ENCODE measurements at regions of chr14 and their contacts with region 1.

Region 1: GRCh38 chr14:50599700-50600444 is 39.9 kb downstream of the ATL1 start:
- DNase-seq: peak in 1 of 2 experiments; percentile 63
- H3K4me3 ChIP-seq: no peak overlapping the region; the same call in 1 of the 2 replicates
- H3K27ac ChIP-seq: no peak overlapping the region
- H3K4me1 ChIP-seq: peaks cover 20% of the 10 kb centered on the region
- H3K27me3 ChIP-seq: no peaks in the 10 kb centered on the region
- CTCF ChIP-seq: peak; percentile 70

Region 2: DNA sequence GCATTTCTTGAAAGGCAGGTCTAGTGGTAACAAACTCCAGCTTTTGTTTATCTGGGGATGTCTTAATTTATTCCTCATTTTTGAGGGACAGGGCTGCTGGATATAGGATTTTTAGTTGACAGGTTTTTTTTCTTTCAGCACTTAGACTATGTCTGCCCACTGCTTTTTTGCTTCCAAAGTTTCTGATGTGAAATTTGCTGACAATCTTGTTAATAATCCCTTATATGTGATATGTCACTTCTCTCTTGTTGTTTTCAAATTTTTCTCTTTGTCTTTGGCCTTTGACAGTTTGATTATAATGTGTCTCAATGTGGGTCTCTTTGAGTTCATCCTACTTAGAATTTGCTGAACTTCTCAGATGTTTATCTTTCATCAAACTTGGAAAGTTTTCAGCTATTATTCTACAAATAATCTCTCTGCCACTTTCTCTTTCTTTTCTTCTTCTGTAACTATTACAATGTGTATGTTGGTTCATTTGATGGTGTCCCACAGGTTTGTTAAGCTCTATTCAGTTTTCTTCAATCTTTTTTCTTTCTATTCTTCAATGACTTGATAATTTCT is 30.1 kb before region 1 on chr14:
- CTCF ChIA-PET with region 1: no interaction called
- POLR2A ChIA-PET with region 1: no interaction called
- intact Hi-C with region 1: no loop called
- DNase-seq: no peak
- H3K4me3 ChIP-seq: no peak overlapping the region
- H3K27ac ChIP-seq: no peak overlapping the region
- H3K4me1 ChIP-seq: no peaks in the 10 kb centered on the region; the same call in 1 of the 2 replicates
- H3K27me3 ChIP-seq: no peaks in the 10 kb centered on the region
- CTCF ChIP-seq: no peak

Region 3: DNA sequence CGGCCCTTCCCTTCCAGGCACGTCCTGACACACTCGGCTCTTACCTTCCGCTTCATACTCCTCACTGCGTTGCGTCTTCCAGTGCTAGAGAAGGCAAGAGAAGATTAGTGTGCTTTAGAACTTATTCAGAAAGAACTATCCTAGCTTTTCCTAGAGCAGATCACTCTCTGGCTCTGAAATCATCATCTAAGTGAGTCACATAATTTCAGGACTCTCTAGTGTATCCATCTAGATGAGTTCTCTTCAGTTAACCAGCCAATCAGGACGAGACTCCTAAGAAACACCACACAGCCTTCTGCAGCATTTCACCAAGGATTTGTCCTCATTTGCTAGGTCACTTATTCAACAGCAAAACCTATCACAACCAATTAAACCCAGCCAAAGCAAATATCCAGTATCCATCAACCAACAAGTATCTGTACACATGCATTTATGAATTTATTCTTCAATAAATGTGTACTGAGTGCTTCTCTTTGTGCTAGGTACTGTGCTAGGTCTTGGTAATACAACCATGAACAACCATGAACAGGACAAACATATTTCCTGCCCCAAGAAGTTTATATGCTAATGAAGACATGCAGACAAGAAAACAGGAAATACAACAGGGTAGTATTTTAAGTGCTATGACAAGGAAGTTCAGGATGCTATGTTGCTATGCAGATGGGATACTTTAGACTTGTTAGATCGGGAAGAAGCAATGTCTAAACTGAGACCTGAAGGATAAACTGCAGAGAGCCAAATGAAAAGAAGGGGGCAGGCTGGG is 179.0 kb after region 1 on chr14:
- CTCF ChIA-PET with region 1: interaction called, 8 read pairs
- POLR2A ChIA-PET with region 1: no interaction called
- intact Hi-C with region 1: loop called (anchors 1 kb)
- DNase-seq: no peak
- H3K4me3 ChIP-seq: no peak overlapping the region
- H3K27ac ChIP-seq: no peak overlapping the region
- H3K4me1 ChIP-seq: peaks cover 19% of the 10 kb centered on the region
- H3K27me3 ChIP-seq: no peaks in the 10 kb centered on the region
- CTCF ChIP-seq: no peak